MCF 10A (cell line): ENCODE measurements at regions of chr7 and their contacts with region 1.

Region 1: GRCh38 chr7:92717993-92718716 is 118.2 kb downstream of the CDK6 start:
- DNase-seq: peak; percentile 83
- H3K4me3 Mint-ChIP-seq: peak overlapping the region; percentile 81
- H3K27ac Mint-ChIP-seq: peak overlapping the region; percentile 96
- H3K4me1 Mint-ChIP-seq: peaks cover 28% of the 10 kb centered on the region
- H3K27me3 Mint-ChIP-seq: no peaks in the 10 kb centered on the region
- CTCF ChIP-seq: no peak

Region 2: GRCh38 chr7:92633211-92633906 is 84.8 kb before region 1 on chr7:
- CTCF ChIA-PET with region 1: no interaction called
- POLR2A ChIA-PET with region 1: no interaction called
- intact Hi-C with region 1: no loop called
- DNase-seq: peak; percentile 90
- H3K4me3 Mint-ChIP-seq: peak overlapping the region; percentile 60
- H3K27ac Mint-ChIP-seq: peak overlapping the region; percentile 70
- H3K4me1 Mint-ChIP-seq: peaks cover 39% of the 10 kb centered on the region
- H3K27me3 Mint-ChIP-seq: no peaks in the 10 kb centered on the region
- CTCF ChIP-seq: no peak

Region 3: GRCh38 chr7:92698237-92698841 is 19.8 kb before region 1 on chr7:
- CTCF ChIA-PET with region 1: interaction called, 8 read pairs
- POLR2A ChIA-PET with region 1: interaction called, 12 read pairs
- intact Hi-C with region 1: no loop called
- DNase-seq: peak; percentile 65
- H3K4me3 Mint-ChIP-seq: no peak overlapping the region
- H3K27ac Mint-ChIP-seq: peak overlapping the region; percentile 63
- H3K4me1 Mint-ChIP-seq: peaks cover 54% of the 10 kb centered on the region
- H3K27me3 Mint-ChIP-seq: no peaks in the 10 kb centered on the region
- CTCF ChIP-seq: no peak